ENCODE measurements at regions of chr10 and their contacts with region 1.

Region 1: GRCh38 chr10:118423800-118424479 is 81.8 kb upstream of the FAM204A start:
- DNase-seq: peak; percentile 94
- ATAC-seq: peak; percentile 99
- H3K4me3 Mint-ChIP-seq: no peak overlapping the region
- H3K27ac Mint-ChIP-seq: no peak overlapping the region
- H3K4me1 Mint-ChIP-seq: no peaks in the 10 kb centered on the region; the same call in 1 of the 2 replicates
- H3K27me3 Mint-ChIP-seq: peaks cover 4% of the 10 kb centered on the region; the same call in 1 of the 2 replicates
- CTCF ChIP-seq: peak; percentile 62

Region 2: GRCh38 chr10:118264838-118265510 is 159.0 kb before region 1 on chr10:
- CTCF ChIA-PET with region 1: interaction called, 11 read pairs
- POLR2A ChIA-PET with region 1: no interaction called
- DNase-seq: no peak
- ATAC-seq: no peak
- H3K4me3 Mint-ChIP-seq: no peak overlapping the region
- H3K27ac Mint-ChIP-seq: no peak overlapping the region
- H3K4me1 Mint-ChIP-seq: peaks cover 20% of the 10 kb centered on the region
- H3K27me3 Mint-ChIP-seq: peaks cover 100% of the 10 kb centered on the region
- CTCF ChIP-seq: no peak

Region 3: GRCh38 chr10:118572256-118573041 is 148.5 kb after region 1 on chr10:
- CTCF ChIA-PET with region 1: no interaction called
- POLR2A ChIA-PET with region 1: no interaction called
- DNase-seq: no peak
- ATAC-seq: no peak
- H3K4me3 Mint-ChIP-seq: no peak overlapping the region
- H3K27ac Mint-ChIP-seq: no peak overlapping the region
- H3K4me1 Mint-ChIP-seq: no peaks in the 10 kb centered on the region
- H3K27me3 Mint-ChIP-seq: peaks cover 5% of the 10 kb centered on the region; the same call in 1 of the 2 replicates
- CTCF ChIP-seq: no peak

Measured in WTC11 (cell line).